B cell (primary cell): ENCODE measurements at regions of chr19 and their contacts with region 1.

Region 1: GRCh38 chr19:58439576-58440554 is at the start of gene ZNF132:
- DNase-seq: peak; percentile 99
- ATAC-seq: peak; percentile 98
- H3K4me3 ChIP-seq: peak within 1 kb of the TSS; percentile 60 to 97 (median 74)
- H3K4me3 Mint-ChIP-seq: peak within 1 kb of the TSS; percentile 99
- H3K27ac ChIP-seq: peak within 1 kb of the TSS; percentile 78 to 97
- H3K27ac Mint-ChIP-seq: peak within 1 kb of the TSS; percentile 98
- H3K4me1 ChIP-seq: peaks cover 14 to 21% of the 10 kb centered on the region in 2 donors
- H3K4me1 Mint-ChIP-seq: peaks cover 23% of the 10 kb centered on the region
- H3K27me3 ChIP-seq: no peaks in the 10 kb centered on the region
- H3K27me3 Mint-ChIP-seq: peaks cover 9% of the 10 kb centered on the region
- CTCF ChIP-seq: no peak
- total RNA-seq, gene ZNF132: 14.7 and 15.2 TPM in 2 replicates

Region 2: DNA sequence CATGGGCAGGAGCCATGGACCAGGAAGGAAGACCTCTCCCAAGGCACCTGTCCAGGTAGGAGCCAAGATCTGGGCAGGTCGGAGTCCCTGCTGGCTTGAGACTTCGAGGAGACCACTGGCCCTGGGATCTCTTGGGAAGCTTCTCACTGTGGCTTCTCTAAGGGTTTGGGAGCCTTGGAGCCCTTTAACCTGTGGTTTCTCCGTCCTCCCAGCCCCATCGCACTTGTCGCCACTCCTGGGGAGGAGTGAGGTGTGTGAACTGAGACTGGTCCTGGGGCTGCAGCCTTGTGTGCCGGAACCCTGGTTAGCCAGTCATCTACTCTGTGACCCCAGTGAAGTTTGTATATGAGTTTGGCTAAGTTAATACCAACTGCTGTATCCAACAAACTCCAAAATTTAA is 1191.2 kb before region 1 on chr19:
- CTCF ChIA-PET with region 1: no interaction called
- POLR2A ChIA-PET with region 1: no interaction called
- intact Hi-C with region 1: no loop called
- DNase-seq: no peak
- ATAC-seq: no peak
- H3K4me3 ChIP-seq: no peak overlapping the region
- H3K4me3 Mint-ChIP-seq: no peak overlapping the region
- H3K27ac ChIP-seq: no peak overlapping the region
- H3K27ac Mint-ChIP-seq: no peak overlapping the region
- H3K4me1 ChIP-seq: no peaks in the 10 kb centered on the region
- H3K4me1 Mint-ChIP-seq: peaks cover 2% of the 10 kb centered on the region
- H3K27me3 ChIP-seq: no peaks in the 10 kb centered on the region
- H3K27me3 Mint-ChIP-seq: no peaks in the 10 kb centered on the region
- CTCF ChIP-seq: no peak

Region 3: DNA sequence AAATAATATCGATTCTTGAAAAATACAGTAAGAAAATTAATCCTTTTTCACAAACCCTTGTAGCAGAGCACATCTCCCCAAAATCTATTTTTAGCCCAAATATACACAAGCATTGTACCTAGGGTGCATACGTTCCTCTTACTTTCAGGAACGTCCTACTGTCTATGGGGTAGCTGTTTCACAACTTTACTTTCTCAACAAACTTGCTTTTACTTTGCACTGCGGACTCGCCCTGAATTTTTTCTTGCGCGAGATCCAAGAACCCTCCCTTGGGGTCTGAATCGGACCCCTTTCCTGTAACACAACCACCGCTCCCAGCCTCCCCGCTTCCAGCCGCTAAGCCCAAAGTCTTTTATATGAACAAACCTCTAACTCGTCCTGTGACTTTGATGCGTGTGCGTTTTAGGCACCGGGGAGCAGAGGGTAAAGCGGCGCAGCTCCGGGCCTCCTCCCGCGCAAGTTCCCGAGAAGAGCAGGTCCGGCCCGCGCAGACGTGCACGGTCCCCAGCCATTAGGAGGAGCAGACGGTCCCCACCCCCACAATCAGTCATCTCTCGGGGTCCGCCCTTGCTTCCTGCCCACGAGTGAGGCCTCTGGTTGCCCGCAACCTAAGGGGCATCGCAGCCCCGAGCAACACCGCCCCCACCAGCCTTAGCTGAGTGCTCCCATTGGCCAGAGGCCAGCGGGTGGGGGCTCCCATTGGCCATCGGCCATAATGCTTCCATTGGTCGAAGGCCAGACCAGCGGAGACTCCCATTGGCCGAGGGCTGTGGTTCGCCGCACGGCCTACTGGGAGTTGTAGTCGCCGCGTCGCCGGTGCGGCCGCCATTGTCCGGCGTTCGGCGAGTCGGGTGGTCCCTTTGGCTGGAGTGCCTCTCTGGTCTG is 161.5 kb before region 1 on chr19 and contains the start of gene ZNF8:
- CTCF ChIA-PET with region 1: no interaction called
- POLR2A ChIA-PET with region 1: no interaction called
- intact Hi-C with region 1: loop called (anchors 1 kb)
- DNase-seq: peak; percentile 96
- ATAC-seq: peak; percentile 98
- H3K4me3 ChIP-seq: peak within 1 kb of the TSS; percentile 72 to 98 (median 95)
- H3K4me3 Mint-ChIP-seq: peak within 1 kb of the TSS; percentile 91
- H3K27ac ChIP-seq: peak within 1 kb of the TSS; percentile 73 to 86
- H3K27ac Mint-ChIP-seq: peak within 1 kb of the TSS; percentile 93
- H3K4me1 ChIP-seq: peaks cover 13 to 19% of the 10 kb centered on the region in 2 donors
- H3K4me1 Mint-ChIP-seq: peaks cover 38% of the 10 kb centered on the region
- H3K27me3 ChIP-seq: no peaks in the 10 kb centered on the region
- H3K27me3 Mint-ChIP-seq: no peaks in the 10 kb centered on the region
- CTCF ChIP-seq: no peak
- total RNA-seq, gene ZNF8: 7.9 and 8.0 TPM in 2 replicates

Region 4: DNA sequence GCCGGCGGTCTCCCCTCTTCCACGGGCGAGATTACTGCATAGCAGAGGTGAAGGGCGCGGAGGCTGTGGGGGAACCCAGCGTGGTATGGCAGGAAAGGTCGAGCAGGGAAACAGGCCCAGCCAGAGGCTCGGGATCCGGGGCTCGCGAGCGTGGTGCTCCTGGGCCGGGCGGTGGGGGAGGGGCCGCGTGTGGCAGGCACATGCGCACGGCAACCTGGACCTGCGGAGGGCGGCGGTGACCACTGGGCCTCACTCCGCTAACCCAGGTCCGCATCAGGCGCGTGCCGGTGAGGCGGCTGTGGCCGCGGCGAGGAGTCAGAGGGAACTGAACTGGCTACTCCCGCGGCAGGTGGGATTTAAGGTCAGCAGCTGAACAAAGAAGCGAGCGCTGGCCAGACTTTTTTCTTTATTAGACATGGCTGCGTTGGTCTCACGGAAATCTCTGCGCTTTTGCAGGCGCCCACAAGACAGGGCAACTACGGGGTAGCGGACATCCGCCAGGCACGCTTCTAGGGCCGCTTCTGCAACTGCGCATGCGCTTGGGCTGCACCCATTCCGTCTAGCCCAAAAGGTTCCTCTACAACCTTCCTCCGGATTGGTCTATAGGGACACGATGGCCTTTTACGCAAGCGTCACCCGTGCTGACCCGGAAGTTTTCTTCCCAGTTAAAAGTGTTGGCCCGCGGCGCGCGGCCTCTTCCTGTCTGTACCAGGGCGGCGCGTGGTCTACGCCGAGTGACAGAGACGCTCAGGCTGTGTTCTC is 53.1 kb before region 1 on chr19 and contains the start of gene RPS5:
- CTCF ChIA-PET with region 1: no interaction called
- POLR2A ChIA-PET with region 1: interaction called, 5 read pairs
- intact Hi-C with region 1: loop called (anchors 1 kb)
- DNase-seq: peak; percentile 98
- ATAC-seq: peak; percentile 90
- H3K4me3 ChIP-seq: peak within 1 kb of the TSS; percentile 71 to 87 (median 76)
- H3K4me3 Mint-ChIP-seq: peak within 1 kb of the TSS; percentile 97
- H3K27ac ChIP-seq: peak within 1 kb of the TSS; percentile 94 to 95
- H3K27ac Mint-ChIP-seq: peak within 1 kb of the TSS; percentile 99
- H3K4me1 ChIP-seq: peaks cover 27 to 33% of the 10 kb centered on the region in 2 donors
- H3K4me1 Mint-ChIP-seq: peaks cover 44% of the 10 kb centered on the region
- H3K27me3 ChIP-seq: no peaks in the 10 kb centered on the region
- H3K27me3 Mint-ChIP-seq: no peaks in the 10 kb centered on the region
- CTCF ChIP-seq: no peak
- total RNA-seq, gene RPS5: 1,234 and 1,311 TPM in 2 replicates

Region 5: GRCh38 chr19:58408152-58409009 is 31.5 kb before region 1 on chr19 and contains the start of gene ZNF584:
- CTCF ChIA-PET with region 1: interaction called, 4 read pairs
- POLR2A ChIA-PET with region 1: interaction called, 10 read pairs
- intact Hi-C with region 1: loop called (anchors 1 kb)
- DNase-seq: peak; percentile 96
- ATAC-seq: peak; percentile 96
- H3K4me3 ChIP-seq: peak within 1 kb of the TSS; percentile 58 to 93 (median 83)
- H3K4me3 Mint-ChIP-seq: peak within 1 kb of the TSS; percentile 97
- H3K27ac ChIP-seq: peak within 1 kb of the TSS; percentile 82 to 93
- H3K27ac Mint-ChIP-seq: peak within 1 kb of the TSS; percentile 98
- H3K4me1 ChIP-seq: peaks cover 11 to 20% of the 10 kb centered on the region in 2 donors
- H3K4me1 Mint-ChIP-seq: peaks cover 33% of the 10 kb centered on the region
- H3K27me3 ChIP-seq: no peaks in the 10 kb centered on the region
- H3K27me3 Mint-ChIP-seq: no peaks in the 10 kb centered on the region
- CTCF ChIP-seq: no peak
- total RNA-seq, gene ZNF584: 12.3 and 14.0 TPM in 2 replicates

Region 6: DNA sequence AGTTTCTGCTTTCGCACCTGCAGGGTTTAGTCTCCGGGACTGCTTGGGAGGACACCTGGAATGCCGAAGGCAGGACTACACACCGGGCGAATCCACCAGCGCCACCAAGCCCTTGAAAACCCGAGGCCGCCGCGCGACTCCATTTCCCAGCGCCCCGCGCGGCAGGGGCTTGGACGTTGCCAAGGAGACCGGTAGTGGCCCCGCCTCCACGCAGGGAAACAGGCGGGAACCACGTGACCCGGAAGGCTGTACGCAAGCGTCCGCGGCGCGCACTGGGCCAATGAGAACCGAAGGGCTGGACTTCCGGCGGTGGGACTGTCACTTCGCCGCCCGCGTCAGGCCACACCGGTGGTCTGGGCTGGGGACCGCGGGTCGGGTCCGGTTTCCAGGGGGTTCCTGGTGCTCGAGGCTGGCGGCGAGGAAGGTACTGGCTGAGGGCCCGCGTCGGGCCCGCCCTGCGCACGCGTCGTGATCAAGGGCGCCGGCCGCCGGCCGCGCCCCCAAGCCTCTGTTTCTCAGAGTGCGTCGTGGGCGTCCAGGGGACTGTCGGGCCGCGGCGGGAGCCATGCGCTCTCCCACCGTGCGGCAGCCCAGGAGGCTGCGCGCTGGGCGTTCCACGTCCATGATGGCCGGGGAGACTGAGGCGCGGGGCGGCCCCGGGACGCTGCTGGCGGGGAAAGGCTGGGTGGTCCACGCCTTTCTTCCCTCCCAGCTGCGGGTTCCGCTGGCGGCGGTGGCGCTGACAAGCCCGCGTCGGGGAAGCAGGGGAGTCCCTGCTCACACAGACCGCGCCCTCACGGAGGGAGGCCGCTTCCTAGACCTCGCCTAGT is 27.1 kb after region 1 on chr19 and contains the start of gene ZNF324:
- CTCF ChIA-PET with region 1: no interaction called
- POLR2A ChIA-PET with region 1: no interaction called
- intact Hi-C with region 1: loop called (anchors 1 kb)
- DNase-seq: peak; percentile 97
- ATAC-seq: peak; percentile 96
- H3K4me3 ChIP-seq: peak within 1 kb of the TSS; percentile 34 to 91 (median 89)
- H3K4me3 Mint-ChIP-seq: peak within 1 kb of the TSS; percentile 85
- H3K27ac ChIP-seq: peak within 1 kb of the TSS; percentile 18 to 90
- H3K27ac Mint-ChIP-seq: peak within 1 kb of the TSS; percentile 85
- H3K4me1 ChIP-seq: peaks cover 8 to 25% of the 10 kb centered on the region in 2 donors
- H3K4me1 Mint-ChIP-seq: peaks cover 26% of the 10 kb centered on the region
- H3K27me3 ChIP-seq: no peaks in the 10 kb centered on the region
- H3K27me3 Mint-ChIP-seq: no peaks in the 10 kb centered on the region
- CTCF ChIP-seq: no peak
- total RNA-seq, gene ZNF324: 17.6 and 21.0 TPM in 2 replicates

Region 7: GRCh38 chr19:58499021-58499927 is 59.4 kb after region 1 on chr19:
- CTCF ChIA-PET with region 1: no interaction called
- POLR2A ChIA-PET with region 1: no interaction called
- intact Hi-C with region 1: loop called (anchors 1 kb)
- DNase-seq: peak; percentile 96
- ATAC-seq: peak; percentile 89
- H3K4me3 ChIP-seq: peak overlapping the region; percentile 55 to 81 (median 69)
- H3K4me3 Mint-ChIP-seq: peak overlapping the region; percentile 91
- H3K27ac ChIP-seq: peak overlapping the region; percentile 74 to 85
- H3K27ac Mint-ChIP-seq: peak overlapping the region; percentile 93
- H3K4me1 ChIP-seq: peaks cover 9 to 20% of the 10 kb centered on the region in 2 donors
- H3K4me1 Mint-ChIP-seq: peaks cover 19% of the 10 kb centered on the region
- H3K27me3 ChIP-seq: no peaks in the 10 kb centered on the region
- H3K27me3 Mint-ChIP-seq: no peaks in the 10 kb centered on the region
- CTCF ChIP-seq: peak; percentile 45

Region 8: DNA sequence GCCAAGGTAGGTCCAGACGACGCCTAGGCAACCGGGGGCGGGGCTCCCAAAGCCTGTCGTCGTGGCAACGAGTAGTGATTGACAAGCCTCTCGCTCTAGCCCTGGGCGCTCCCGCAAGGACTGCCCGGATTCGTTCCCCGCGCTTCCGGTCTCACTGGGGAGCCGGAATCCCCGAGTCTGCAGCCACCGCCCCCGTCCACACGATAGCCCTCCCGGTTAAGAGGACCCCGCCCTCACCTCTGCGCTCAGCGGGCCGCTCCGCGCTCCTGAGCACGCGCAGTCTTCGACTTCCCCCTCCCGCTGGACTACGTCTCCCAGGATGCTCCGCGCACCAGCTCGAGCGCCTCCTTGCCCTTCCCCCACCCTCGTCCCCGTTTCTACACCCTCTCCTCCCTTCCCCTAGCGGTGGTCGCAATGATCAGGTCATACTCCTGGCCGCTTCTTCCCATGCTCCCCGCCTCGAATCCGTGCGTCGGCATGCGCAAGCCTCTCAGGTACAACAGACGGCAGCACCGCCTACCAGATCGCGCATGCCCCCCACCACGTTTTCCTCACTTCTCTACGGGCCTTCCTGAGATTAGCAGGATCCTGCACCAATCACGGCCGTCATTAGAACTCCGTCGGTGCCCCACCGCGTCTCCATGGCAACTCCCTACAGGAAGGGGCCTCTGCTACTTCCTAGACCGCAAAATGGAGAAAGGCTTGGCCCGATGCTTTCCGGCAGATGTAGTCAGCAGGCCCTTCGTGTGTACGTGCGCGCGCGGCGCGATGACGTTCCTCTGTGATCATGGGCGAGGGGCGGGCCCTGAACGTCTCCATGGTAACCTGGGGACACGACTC is 133.2 kb after region 1 on chr19 and contains the start of gene MZF1:
- CTCF ChIA-PET with region 1: no interaction called
- POLR2A ChIA-PET with region 1: interaction called, 3 read pairs
- intact Hi-C with region 1: loop called (anchors 1 kb)
- DNase-seq: peak; percentile 100
- ATAC-seq: peak; percentile 62
- H3K4me3 ChIP-seq: peak within 1 kb of the TSS; percentile 59 to 77 (median 74)
- H3K4me3 Mint-ChIP-seq: peak within 1 kb of the TSS; percentile 95
- H3K27ac ChIP-seq: peak within 1 kb of the TSS; percentile 99
- H3K27ac Mint-ChIP-seq: peak within 1 kb of the TSS; percentile 99
- H3K4me1 ChIP-seq: peaks cover 25 to 37% of the 10 kb centered on the region in 2 donors
- H3K4me1 Mint-ChIP-seq: peaks cover 41% of the 10 kb centered on the region
- H3K27me3 ChIP-seq: no peaks in the 10 kb centered on the region
- H3K27me3 Mint-ChIP-seq: no peaks in the 10 kb centered on the region
- CTCF ChIP-seq: no peak
- total RNA-seq, gene MZF1: 79.4 and 81.4 TPM in 2 replicates